Activated CD4-positive, alpha-beta memory T cell treated with anti-CD3 and anti-CD28 coated beads for 36 hours (primary cell): ENCODE measurements at regions of chr2 and their contacts with region 1.

Region 1: DNA sequence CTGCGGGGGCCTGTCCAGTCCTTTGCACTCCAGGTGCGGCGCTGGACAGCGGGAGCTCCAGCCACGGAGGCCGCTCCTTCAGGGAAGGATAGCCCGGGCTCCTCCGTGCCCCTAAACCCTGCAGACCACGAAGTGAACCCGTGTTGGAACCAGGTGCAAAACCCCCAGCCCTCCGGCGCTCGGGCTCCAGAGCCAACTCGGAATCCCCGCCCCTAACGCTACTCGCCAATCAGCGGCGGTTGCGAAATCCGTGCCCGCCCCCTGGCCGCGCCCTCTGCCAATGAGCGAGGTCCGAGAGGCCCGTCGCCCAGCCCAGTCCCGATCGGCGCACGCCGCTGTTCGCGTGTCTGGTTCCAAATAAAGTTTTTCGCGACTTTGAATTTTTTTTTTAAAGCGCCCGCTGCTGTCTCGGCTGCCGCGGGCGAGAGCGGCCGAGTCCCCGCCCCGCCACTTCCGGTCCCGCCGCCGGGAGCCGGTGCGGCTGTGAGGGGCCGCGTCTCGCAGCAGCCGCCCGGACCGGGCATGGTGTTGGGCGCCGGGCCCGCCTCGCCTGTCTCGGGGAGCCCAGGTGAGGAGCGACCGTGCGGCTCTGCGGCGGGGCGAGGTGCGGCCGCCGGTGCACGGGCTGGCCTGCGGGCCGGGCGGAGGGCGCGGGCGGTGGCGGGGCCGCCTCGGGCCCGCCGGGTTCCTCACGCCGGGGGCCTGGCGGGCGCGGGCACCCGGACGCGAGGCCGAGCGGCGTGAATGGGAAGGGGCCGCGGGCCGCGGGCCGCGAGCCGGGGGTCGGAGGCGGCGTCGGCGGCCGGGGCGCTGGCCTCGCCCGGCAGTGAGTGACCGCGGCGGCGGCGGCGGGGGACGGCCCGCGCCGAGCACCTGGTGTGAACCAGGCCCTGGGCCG is at the start of gene UBE2F:
- DNase-seq: peak; percentile 98
- H3K4me3 Mint-ChIP-seq: peak within 1 kb of the TSS; percentile 86
- H3K27ac Mint-ChIP-seq: peak within 1 kb of the TSS; percentile 77
- H3K4me1 Mint-ChIP-seq: peaks cover 40% of the 10 kb centered on the region
- H3K27me3 Mint-ChIP-seq: no peaks in the 10 kb centered on the region
- total RNA-seq, gene UBE2F: 50.7 to 52.9 TPM

Region 2: GRCh38 chr2:237441605-237442274 is 525.1 kb before region 1 on chr2:
- CTCF ChIA-PET with region 1: no interaction called
- POLR2A ChIA-PET with region 1: no interaction called
- intact Hi-C with region 1: no loop called
- DNase-seq: peak; percentile 69
- H3K4me3 Mint-ChIP-seq: peak overlapping the region; percentile 40
- H3K27ac Mint-ChIP-seq: peak overlapping the region; percentile 98
- H3K4me1 Mint-ChIP-seq: peaks cover 73% of the 10 kb centered on the region
- H3K27me3 Mint-ChIP-seq: peaks cover 2% of the 10 kb centered on the region

Region 3: GRCh38 chr2:237858294-237859081 is 108.3 kb before region 1 on chr2:
- CTCF ChIA-PET with region 1: no interaction called
- POLR2A ChIA-PET with region 1: no interaction called
- intact Hi-C with region 1: loop called (anchors 5 kb)
- DNase-seq: peak; percentile 68
- H3K4me3 Mint-ChIP-seq: peak overlapping the region; percentile 5
- H3K27ac Mint-ChIP-seq: no peak overlapping the region
- H3K4me1 Mint-ChIP-seq: peaks cover 15% of the 10 kb centered on the region
- H3K27me3 Mint-ChIP-seq: peaks cover 36% of the 10 kb centered on the region

Region 4: DNA sequence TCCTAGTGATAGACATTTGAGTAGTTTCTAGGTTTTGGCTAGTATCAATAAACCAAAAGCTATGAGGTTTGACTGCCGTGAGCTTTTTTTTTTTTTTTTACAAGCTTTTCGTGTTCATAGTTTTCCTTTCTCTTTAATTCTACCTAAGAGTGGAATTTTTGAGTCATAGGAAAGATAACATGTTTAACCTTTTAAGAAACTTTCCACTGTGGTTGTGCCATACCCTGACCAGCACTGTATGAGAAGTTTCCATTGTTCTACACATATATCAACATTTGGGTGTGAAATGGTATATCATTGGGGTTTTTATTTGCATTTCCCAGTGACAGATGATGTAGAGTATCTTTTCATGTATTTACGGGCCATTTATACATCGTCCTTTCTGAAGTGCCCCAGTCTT is 31.7 kb after region 1 on chr2:
- CTCF ChIA-PET with region 1: interaction called, 9 read pairs
- POLR2A ChIA-PET with region 1: no interaction called
- intact Hi-C with region 1: loop called (anchors 1 kb)
- DNase-seq: peak; percentile 65
- H3K4me3 Mint-ChIP-seq: peak overlapping the region; percentile 62
- H3K27ac Mint-ChIP-seq: peak overlapping the region; percentile 93
- H3K4me1 Mint-ChIP-seq: peaks cover 57% of the 10 kb centered on the region
- H3K27me3 Mint-ChIP-seq: no peaks in the 10 kb centered on the region

Region 5: DNA sequence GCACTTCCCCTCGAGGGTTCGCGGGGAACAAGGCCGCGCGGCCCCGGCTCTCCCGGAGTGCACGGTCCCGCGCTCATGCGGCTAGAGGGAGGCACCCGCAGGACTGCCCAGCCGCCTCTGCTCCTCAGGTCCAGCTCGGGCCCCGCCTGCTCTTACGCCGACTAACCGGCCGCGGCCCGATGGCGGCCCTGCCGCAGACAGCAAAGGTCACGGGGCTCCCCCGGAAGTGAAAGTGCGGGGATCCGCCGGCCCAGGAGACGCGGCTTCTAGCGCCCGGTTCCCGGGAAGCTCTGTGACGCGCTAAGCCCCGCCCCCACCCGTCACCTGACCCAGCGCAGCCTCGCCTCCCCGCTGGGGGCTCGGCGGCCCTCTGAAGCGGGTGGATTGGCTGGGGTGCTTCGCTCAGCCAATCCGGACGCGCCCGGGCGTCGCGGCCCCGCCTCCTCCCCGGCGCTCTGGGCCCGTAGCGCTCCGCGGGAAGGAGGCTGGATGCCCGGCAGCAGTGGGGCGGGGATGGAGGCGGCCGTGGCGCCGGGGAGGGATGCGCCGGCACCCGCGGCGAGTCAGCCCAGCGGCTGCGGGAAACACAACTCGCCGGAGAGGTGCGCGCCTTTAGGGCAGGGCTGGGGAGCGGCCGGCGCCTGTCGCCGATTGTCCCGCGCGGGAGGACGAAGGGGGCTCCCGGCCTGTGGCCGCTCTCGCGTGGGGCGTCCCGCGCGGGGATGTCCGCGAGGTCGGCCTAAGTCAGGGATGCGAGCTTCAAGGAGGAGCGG is 93.9 kb after region 1 on chr2 and contains the start of gene SCLY:
- CTCF ChIA-PET with region 1: interaction called, 6 read pairs
- POLR2A ChIA-PET with region 1: no interaction called
- intact Hi-C with region 1: loop called (anchors 1 kb)
- DNase-seq: peak; percentile 98
- H3K4me3 Mint-ChIP-seq: peak within 1 kb of the TSS; percentile 91
- H3K27ac Mint-ChIP-seq: peak within 1 kb of the TSS; percentile 85
- H3K4me1 Mint-ChIP-seq: peaks cover 47% of the 10 kb centered on the region
- H3K27me3 Mint-ChIP-seq: peaks cover 8% of the 10 kb centered on the region
- total RNA-seq, gene SCLY: 47.9 to 51.8 TPM

Region 6: GRCh38 chr2:238263204-238264071 is 296.6 kb after region 1 on chr2:
- CTCF ChIA-PET with region 1: interaction called, 3 read pairs
- POLR2A ChIA-PET with region 1: no interaction called
- intact Hi-C with region 1: loop called (anchors 1 kb)
- DNase-seq: peak; percentile 86
- H3K4me3 Mint-ChIP-seq: no peak overlapping the region
- H3K27ac Mint-ChIP-seq: no peak overlapping the region
- H3K4me1 Mint-ChIP-seq: peaks cover 8% of the 10 kb centered on the region
- H3K27me3 Mint-ChIP-seq: no peaks in the 10 kb centered on the region